Naive thymus-derived CD4-positive, alpha-beta T cell (primary cell): ENCODE measurements at regions of chr20 and their contacts with region 1.

Region 1: GRCh38 chr20:62500237-62500864 is 24.6 kb upstream of the GATA5 start:
- DNase-seq: peak; percentile 43 to 84 (median 70)
- ATAC-seq: peak; percentile 73
- H3K4me3 ChIP-seq: no peak overlapping the region
- H3K4me3 Mint-ChIP-seq: peak overlapping the region in 1 of 10 donors; percentile 24
- H3K27ac ChIP-seq: no peak overlapping the region
- H3K27ac Mint-ChIP-seq: peak overlapping the region in 3 of 9 donors; percentile 60 to 95 (median 70)
- H3K4me1 ChIP-seq: peaks cover 0 to 5% of the 10 kb centered on the region in 2 donors
- H3K4me1 Mint-ChIP-seq: peaks cover 0 to 27% (median 9%) of the 10 kb centered on the region in 7 donors
- H3K27me3 ChIP-seq: no peaks in the 10 kb centered on the region
- H3K27me3 Mint-ChIP-seq: peaks cover 0 to 5% (median 0%) of the 10 kb centered on the region in 5 donors

Region 2: GRCh38 chr20:62182613-62183425 is 317.5 kb before region 1 on chr20 and contains the start of gene MTG2:
- CTCF ChIA-PET with region 1: no interaction called
- POLR2A ChIA-PET with region 1: no interaction called
- intact Hi-C with region 1: no loop called
- DNase-seq: peak; percentile 81 to 94 (median 93)
- ATAC-seq: peak; percentile 95
- H3K4me3 ChIP-seq: peak within 1 kb of the TSS; percentile 87
- H3K4me3 Mint-ChIP-seq: peak within 1 kb of the TSS; percentile 84 to 95 (median 90)
- H3K27ac ChIP-seq: peak within 1 kb of the TSS; percentile 92
- H3K27ac Mint-ChIP-seq: peak within 1 kb of the TSS; percentile 90 to 97 (median 95)
- H3K4me1 ChIP-seq: peaks cover 9 to 16% of the 10 kb centered on the region in 2 donors
- H3K4me1 Mint-ChIP-seq: peaks cover 15 to 55% (median 42%) of the 10 kb centered on the region in 7 donors
- H3K27me3 ChIP-seq: no peaks in the 10 kb centered on the region
- H3K27me3 Mint-ChIP-seq: no peaks in the 10 kb centered on the region
- total RNA-seq, gene MTG2: 20.4 to 51.5 (median 41.8) TPM

Region 3: DNA sequence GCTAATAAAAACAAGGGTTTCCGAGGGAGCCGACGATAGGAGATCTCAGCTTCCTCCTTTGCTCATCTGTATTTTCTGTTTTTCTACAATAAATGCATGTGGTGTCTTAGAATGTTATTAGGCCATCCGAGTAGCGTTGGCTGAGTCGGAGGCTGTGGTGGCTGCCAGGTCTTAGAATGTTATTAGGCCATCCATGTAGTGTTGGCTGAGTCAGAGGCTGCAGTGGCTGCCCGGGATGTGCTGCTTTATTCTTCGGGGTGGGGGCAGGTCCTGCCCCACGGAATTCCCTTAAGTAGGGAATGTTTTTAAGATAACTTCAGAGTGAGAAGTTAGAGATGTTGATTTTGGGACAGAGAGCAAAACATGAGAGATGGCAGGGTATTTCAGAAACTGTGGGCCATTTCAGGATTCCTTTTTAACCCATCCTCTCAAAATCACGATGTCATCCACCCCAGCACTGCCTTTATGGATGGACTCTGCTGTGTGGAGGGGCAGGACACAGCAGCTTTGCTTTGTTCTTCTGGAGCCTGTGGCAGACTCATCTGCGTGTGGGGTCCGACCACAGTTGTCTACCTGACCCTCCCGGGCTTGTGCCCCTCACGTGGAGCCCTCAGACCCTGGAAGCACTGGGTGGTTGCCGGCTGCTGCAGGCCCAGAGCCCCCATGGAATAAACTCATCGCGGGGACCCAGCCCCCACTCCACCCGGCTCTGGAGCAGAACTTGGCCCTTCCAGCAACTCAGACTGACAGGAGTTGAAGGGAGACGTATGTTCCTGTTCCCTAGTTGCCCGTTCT is 241.7 kb before region 1 on chr20:
- CTCF ChIA-PET with region 1: no interaction called
- POLR2A ChIA-PET with region 1: no interaction called
- intact Hi-C with region 1: no loop called
- DNase-seq: no peak
- ATAC-seq: no peak
- H3K4me3 ChIP-seq: no peak overlapping the region
- H3K4me3 Mint-ChIP-seq: no peak overlapping the region
- H3K27ac ChIP-seq: no peak overlapping the region
- H3K27ac Mint-ChIP-seq: no peak overlapping the region
- H3K4me1 ChIP-seq: no peaks in the 10 kb centered on the region
- H3K4me1 Mint-ChIP-seq: peaks cover 0 to 16% (median 9%) of the 10 kb centered on the region in 7 donors
- H3K27me3 ChIP-seq: no peaks in the 10 kb centered on the region
- H3K27me3 Mint-ChIP-seq: no peaks in the 10 kb centered on the region

Region 4: GRCh38 chr20:62523473-62524203 is 23.3 kb after region 1 on chr20:
- CTCF ChIA-PET with region 1: no interaction called
- POLR2A ChIA-PET with region 1: no interaction called
- intact Hi-C with region 1: loop called in 1 of 2 experiments (anchors 1 kb)
- DNase-seq: peak in 3 of 9 donors; percentile 17 to 76 (median 26)
- ATAC-seq: peak; percentile 59
- H3K4me3 ChIP-seq: no peak overlapping the region
- H3K4me3 Mint-ChIP-seq: peak overlapping the region in 1 of 10 donors; percentile 12
- H3K27ac ChIP-seq: no peak overlapping the region
- H3K27ac Mint-ChIP-seq: no peak overlapping the region
- H3K4me1 ChIP-seq: no peaks in the 10 kb centered on the region
- H3K4me1 Mint-ChIP-seq: peaks cover 0 to 5% (median 0%) of the 10 kb centered on the region in 7 donors
- H3K27me3 ChIP-seq: peaks cover 0 to 3% of the 10 kb centered on the region in 2 donors
- H3K27me3 Mint-ChIP-seq: peaks cover 2 to 26% (median 8%) of the 10 kb centered on the region in 5 donors

Region 5: GRCh38 chr20:62536871-62537401 is 36.6 kb after region 1 on chr20:
- CTCF ChIA-PET with region 1: no interaction called
- POLR2A ChIA-PET with region 1: no interaction called
- intact Hi-C with region 1: no loop called
- DNase-seq: no peak
- ATAC-seq: no peak
- H3K4me3 ChIP-seq: no peak overlapping the region
- H3K4me3 Mint-ChIP-seq: no peak overlapping the region
- H3K27ac ChIP-seq: no peak overlapping the region
- H3K27ac Mint-ChIP-seq: no peak overlapping the region
- H3K4me1 ChIP-seq: no peaks in the 10 kb centered on the region
- H3K4me1 Mint-ChIP-seq: peaks cover 0 to 3% (median 0%) of the 10 kb centered on the region in 7 donors
- H3K27me3 ChIP-seq: no peaks in the 10 kb centered on the region
- H3K27me3 Mint-ChIP-seq: no peaks in the 10 kb centered on the region

Region 6: DNA sequence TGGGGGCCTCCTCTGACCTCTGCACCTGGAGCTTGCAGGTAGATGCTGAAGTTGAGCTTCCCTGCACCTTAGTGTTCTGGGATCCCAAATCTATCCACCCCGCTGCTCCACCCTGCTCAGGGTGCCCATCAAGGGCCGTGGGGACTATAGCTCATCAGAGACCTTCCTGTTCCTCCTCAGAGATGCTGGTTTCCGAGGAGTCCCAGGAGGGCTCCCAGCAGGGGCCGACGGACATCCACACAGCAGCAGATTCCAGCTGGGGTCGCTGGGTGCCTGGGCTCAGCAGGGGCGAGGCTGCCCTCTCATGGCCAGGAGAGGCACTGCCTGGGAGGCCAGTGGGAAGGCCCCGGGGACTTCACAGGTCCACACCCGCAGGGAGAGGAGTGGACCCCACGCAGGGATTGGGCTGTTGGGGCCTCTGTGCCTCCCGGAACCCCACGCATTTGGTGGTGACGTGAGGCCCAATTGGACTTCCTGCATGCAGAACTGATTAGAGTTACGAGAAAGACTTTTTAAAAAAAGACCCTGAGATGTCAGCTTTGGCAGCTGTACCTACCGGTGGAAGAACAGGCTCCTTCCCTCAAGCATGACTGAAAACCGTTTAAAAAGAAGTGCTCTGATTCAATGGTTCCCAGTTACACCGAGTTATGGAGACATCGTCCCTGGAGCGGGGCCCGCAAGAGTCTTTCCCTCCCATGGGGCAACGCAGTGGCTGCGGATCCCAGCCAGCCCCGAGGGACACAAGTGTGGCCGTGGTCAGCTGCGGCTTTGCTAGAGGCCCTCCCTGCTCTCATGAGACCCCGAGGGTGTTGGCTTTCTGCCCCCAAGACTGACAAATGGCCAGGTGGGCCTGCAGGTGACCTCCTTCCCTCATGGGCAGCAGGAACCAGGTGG is 116.6 kb after region 1 on chr20:
- CTCF ChIA-PET with region 1: interaction called, 12 read pairs
- POLR2A ChIA-PET with region 1: no interaction called
- intact Hi-C with region 1: loop called in 1 of 2 experiments (anchors 1 kb)
- DNase-seq: peak; percentile 42 to 82 (median 57)
- ATAC-seq: peak; percentile 86
- H3K4me3 ChIP-seq: no peak overlapping the region
- H3K4me3 Mint-ChIP-seq: peak overlapping the region in 4 of 10 donors; percentile 42 to 82 (median 64)
- H3K27ac ChIP-seq: no peak overlapping the region
- H3K27ac Mint-ChIP-seq: peak overlapping the region in 5 of 9 donors; percentile 28 to 90 (median 72)
- H3K4me1 ChIP-seq: peaks cover 16 to 27% of the 10 kb centered on the region in 2 donors
- H3K4me1 Mint-ChIP-seq: peaks cover 7 to 35% (median 19%) of the 10 kb centered on the region in 7 donors
- H3K27me3 ChIP-seq: no peaks in the 10 kb centered on the region
- H3K27me3 Mint-ChIP-seq: peaks cover 0 to 9% (median 0%) of the 10 kb centered on the region in 5 donors

Region 7: DNA sequence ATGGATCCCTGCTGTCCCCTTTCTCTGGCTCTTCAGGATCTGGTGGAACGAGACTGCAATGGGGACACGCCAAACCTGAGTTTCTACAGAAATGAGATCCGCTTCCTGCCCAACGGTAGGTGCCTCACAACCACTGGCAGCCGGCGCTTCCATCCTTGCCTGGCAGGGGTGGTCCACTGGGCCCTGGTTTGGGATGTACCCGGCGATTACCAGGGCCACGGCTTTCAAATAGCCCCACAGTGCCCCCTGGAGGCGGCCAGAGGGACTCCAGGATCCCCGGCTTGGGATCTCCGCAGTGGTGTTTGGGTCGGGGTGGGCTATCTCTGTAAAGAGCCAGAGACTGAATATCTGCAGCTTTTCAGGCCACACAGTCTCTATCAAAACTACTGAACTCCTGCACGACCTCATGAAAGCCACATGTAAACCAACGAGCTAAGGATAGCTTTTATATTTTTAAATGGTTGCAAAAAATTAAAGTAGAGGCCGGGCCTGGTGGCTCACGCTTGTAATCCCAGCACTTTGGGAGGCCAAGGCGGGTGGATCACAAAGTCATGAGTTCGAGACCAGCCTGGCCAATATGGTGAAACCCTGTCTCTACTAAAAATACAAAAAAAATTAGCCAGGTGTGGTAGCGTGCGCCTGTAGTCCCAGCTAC is 308.0 kb after region 1 on chr20:
- CTCF ChIA-PET with region 1: interaction called, 20 read pairs
- POLR2A ChIA-PET with region 1: no interaction called
- intact Hi-C with region 1: loop called in 1 of 2 experiments (anchors 1 kb)
- DNase-seq: peak; percentile 58 to 84 (median 71)
- ATAC-seq: peak; percentile 70
- H3K4me3 ChIP-seq: no peak overlapping the region
- H3K4me3 Mint-ChIP-seq: peak overlapping the region in 9 of 10 donors; percentile 18 to 82 (median 57)
- H3K27ac ChIP-seq: peak overlapping the region; percentile 22
- H3K27ac Mint-ChIP-seq: peak overlapping the region in 7 of 9 donors; percentile 13 to 88 (median 65)
- H3K4me1 ChIP-seq: peaks cover 16 to 30% of the 10 kb centered on the region in 2 donors
- H3K4me1 Mint-ChIP-seq: peaks cover 16 to 33% (median 25%) of the 10 kb centered on the region in 7 donors
- H3K27me3 ChIP-seq: no peaks in the 10 kb centered on the region
- H3K27me3 Mint-ChIP-seq: no peaks in the 10 kb centered on the region

Region 8: DNA sequence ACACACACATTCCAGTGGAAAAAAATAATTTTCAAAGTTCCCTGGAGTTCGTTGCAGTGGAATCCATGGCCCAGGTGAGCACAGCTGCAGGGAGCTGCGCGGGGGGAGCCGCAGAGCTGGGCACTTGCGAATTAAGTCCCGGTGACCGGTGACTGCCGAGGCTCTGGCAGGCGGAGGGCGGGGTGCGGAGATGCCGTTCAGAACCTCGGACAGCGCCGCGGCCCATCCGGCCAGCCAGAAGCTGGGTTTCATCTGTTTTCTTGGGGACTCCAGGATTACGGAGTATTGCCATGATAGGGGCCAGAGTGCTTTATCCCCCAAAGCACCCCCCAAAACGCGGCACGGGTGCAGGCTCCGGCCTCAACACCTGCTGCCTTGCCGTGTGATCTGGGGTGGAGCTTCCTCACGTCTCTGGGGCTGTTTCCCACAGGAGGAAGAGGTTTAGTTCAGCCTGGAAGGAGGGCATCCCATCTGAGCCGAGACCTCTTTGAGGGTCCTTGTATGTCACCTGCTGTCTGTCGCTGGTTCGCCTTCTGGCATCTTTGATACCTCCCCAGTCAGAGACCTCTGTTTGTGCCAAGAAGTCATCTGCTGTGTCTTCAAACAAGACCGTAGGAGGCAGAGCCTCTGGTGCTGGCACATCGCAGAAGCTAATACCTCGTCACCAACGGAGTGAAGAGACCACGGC is 616.2 kb after region 1 on chr20:
- CTCF ChIA-PET with region 1: no interaction called
- POLR2A ChIA-PET with region 1: no interaction called
- intact Hi-C with region 1: no loop called
- DNase-seq: peak in 1 of 9 donors; percentile 40
- ATAC-seq: no peak
- H3K4me3 ChIP-seq: no peak overlapping the region
- H3K4me3 Mint-ChIP-seq: peak overlapping the region in 1 of 10 donors; percentile 51
- H3K27ac ChIP-seq: no peak overlapping the region
- H3K27ac Mint-ChIP-seq: peak overlapping the region in 1 of 9 donors; percentile 62
- H3K4me1 ChIP-seq: no peaks in the 10 kb centered on the region
- H3K4me1 Mint-ChIP-seq: peaks cover 0 to 1% (median 0%) of the 10 kb centered on the region in 7 donors
- H3K27me3 ChIP-seq: peaks cover 0 to 3% of the 10 kb centered on the region in 2 donors
- H3K27me3 Mint-ChIP-seq: peaks cover 0 to 54% (median 38%) of the 10 kb centered on the region in 5 donors